PC-3 (cell line): ENCODE measurements at regions of chr10 and their contacts with region 1.

Region 1: DNA sequence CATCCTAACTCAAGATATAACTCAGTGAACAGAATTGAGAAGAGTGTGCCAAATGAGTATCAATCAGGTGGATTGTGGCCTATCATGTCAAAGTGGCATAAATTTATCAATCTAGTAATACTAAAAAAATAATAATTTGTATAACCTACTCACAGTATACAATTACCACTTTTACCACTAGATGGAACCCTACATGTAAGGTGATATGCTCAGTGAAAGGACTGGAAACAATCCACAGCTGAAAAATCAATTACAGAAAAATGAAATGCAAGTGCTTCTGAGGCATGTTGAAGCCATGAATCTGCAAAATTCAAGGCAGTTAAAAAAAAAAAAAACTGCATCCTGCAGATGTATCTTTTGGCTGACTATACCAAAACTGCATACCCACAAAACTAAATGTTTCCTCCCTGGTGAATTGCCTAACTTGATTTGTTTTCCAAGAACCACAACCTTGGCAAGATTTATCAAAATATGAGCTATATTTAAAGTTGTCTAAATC is 13.9 kb downstream of the ARHGAP19 start:
- DNase-seq: peak; percentile 68
- ATAC-seq: peak; percentile 76
- H3K4me3 ChIP-seq: no peak overlapping the region
- H3K27ac ChIP-seq: no peak overlapping the region
- H3K4me1 ChIP-seq: peaks cover 10% of the 10 kb centered on the region
- H3K27me3 ChIP-seq: no peaks in the 10 kb centered on the region
- CTCF ChIP-seq: peak; percentile 63

Region 2: GRCh38 chr10:97355571-97355975 is 77.0 kb after region 1 on chr10:
- CTCF ChIA-PET with region 1: no interaction called
- POLR2A ChIA-PET with region 1: no interaction called
- intact Hi-C with region 1: loop called (anchors 2 kb)
- DNase-seq: no peak
- ATAC-seq: peak; percentile 13; the same call in 1 of the 2 replicates
- H3K4me3 ChIP-seq: no peak overlapping the region
- H3K27ac ChIP-seq: no peak overlapping the region
- H3K4me1 ChIP-seq: no peaks in the 10 kb centered on the region
- H3K27me3 ChIP-seq: no peaks in the 10 kb centered on the region
- CTCF ChIP-seq: peak; percentile 46